IMR-90 (cell line): ENCODE measurements at regions of chr10 and their contacts with region 1.

Region 1: DNA sequence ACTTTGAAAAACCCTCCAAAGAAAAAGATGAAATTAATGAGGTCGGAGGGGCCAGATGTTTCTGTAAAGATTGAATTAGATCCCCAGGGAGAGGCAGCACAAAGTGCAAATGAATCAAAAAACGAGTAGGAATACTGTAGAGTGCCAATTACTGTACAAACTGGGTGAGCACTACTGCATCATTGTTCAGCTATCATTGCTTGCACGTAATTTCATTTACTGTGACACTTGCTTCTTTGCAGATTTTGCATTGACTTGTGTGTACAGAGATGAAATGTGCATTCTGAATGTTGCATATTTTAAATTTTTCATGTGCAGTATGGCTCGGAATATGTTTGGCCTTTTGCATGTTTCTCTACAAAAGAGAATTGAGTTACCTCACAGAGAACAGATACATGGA is 123.7 kb downstream of the LCOR start:
- DNase-seq: no peak
- ATAC-seq: no peak
- H3K4me3 ChIP-seq: no peak overlapping the region
- H3K27ac ChIP-seq: no peak overlapping the region
- H3K4me1 ChIP-seq: peaks cover 5% of the 10 kb centered on the region
- H3K27me3 ChIP-seq: no peaks in the 10 kb centered on the region
- CTCF ChIP-seq: no peak
- POLR2A ChIP-seq: no peak
- RAD21 ChIP-seq: no peak

Region 2: GRCh38 chr10:96840841-96841518 is 114.8 kb before region 1 on chr10:
- CTCF ChIA-PET with region 1: no interaction called
- POLR2A ChIA-PET with region 1: no interaction called
- dilution Hi-C with region 1: no loop called
- in situ Hi-C with region 1: no loop called
- intact Hi-C with region 1: loop called (anchors 5 kb)
- DNase-seq: peak; percentile 60
- ATAC-seq: peak; percentile 52; the same call in 1 of the 2 replicates
- H3K4me3 ChIP-seq: no peak overlapping the region
- H3K27ac ChIP-seq: peak overlapping the region; percentile 23; the same call in 1 of the 2 replicates
- H3K4me1 ChIP-seq: peaks cover 14% of the 10 kb centered on the region
- H3K27me3 ChIP-seq: no peaks in the 10 kb centered on the region
- CTCF ChIP-seq: no peak
- POLR2A ChIP-seq: no peak
- RAD21 ChIP-seq: no peak

Region 3: DNA sequence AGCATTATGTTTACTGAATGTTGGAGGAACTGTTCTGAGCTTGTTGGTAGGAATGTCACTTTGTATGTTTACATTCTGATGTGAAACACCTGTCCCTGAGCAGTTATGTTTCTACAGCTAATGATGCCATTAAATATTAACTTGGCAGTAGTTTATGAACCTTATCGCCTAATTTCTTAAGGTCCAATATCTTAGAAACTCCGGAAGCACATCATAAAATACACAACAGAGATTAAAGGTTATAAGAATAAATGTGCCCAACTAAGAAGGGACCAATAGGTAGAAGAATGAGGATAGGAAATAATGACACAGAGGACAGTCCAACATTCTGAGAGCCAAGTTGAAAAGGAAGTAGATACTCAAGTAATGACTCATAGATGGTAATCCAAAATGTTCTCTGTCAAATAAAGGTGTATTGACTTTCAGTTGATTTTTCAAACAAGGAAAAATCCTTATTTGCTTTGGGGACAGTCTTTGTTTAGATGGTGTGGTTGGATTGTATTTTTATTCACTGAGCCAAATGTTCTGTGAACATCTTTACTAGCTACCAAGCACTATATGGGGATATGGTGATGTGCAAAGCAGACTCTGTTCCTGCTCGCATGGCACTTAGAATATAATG is 91.8 kb before region 1 on chr10:
- CTCF ChIA-PET with region 1: no interaction called
- POLR2A ChIA-PET with region 1: no interaction called
- dilution Hi-C with region 1: no loop called
- in situ Hi-C with region 1: no loop called
- intact Hi-C with region 1: no loop called
- DNase-seq: peak; percentile 40
- ATAC-seq: peak; percentile 62
- H3K4me3 ChIP-seq: no peak overlapping the region
- H3K27ac ChIP-seq: no peak overlapping the region
- H3K4me1 ChIP-seq: peaks cover 6% of the 10 kb centered on the region; the same call in 1 of the 2 replicates
- H3K27me3 ChIP-seq: no peaks in the 10 kb centered on the region
- CTCF ChIP-seq: no peak
- POLR2A ChIP-seq: no peak
- RAD21 ChIP-seq: no peak